CD8-positive, alpha-beta T cell (primary cell): ENCODE measurements at regions of chr11 and their contacts with region 1.

Region 1: GRCh38 chr11:118002541-118003423 is 16.6 kb downstream of the IL10RA start:
- DNase-seq: peak in 5 of 9 experiments; percentile 42 to 76 (median 55)
- ATAC-seq: peak; percentile 42
- H3K4me3 ChIP-seq: no peak overlapping the region
- H3K4me3 Mint-ChIP-seq: peak overlapping the region; percentile 26
- H3K27ac ChIP-seq: peak overlapping the region; percentile 20 to 84
- H3K27ac Mint-ChIP-seq: peak overlapping the region; percentile 91
- H3K4me1 ChIP-seq: peaks cover 89% of the 10 kb centered on the region
- H3K4me1 Mint-ChIP-seq: peaks cover 94% of the 10 kb centered on the region
- H3K27me3 ChIP-seq: no peaks in the 10 kb centered on the region
- H3K27me3 Mint-ChIP-seq: no peaks in the 10 kb centered on the region
- CTCF ChIP-seq: no peak

Region 2: GRCh38 chr11:117143871-117144476 is 858.8 kb before region 1 on chr11 and contains the start of gene PAFAH1B2:
- CTCF ChIA-PET with region 1: no interaction called
- POLR2A ChIA-PET with region 1: no interaction called
- intact Hi-C with region 1: no loop called
- DNase-seq: peak; percentile 87 to 97 (median 95)
- ATAC-seq: peak; percentile 82
- H3K4me3 ChIP-seq: peak within 1 kb of the TSS; percentile 74 to 78
- H3K4me3 Mint-ChIP-seq: peak within 1 kb of the TSS; percentile 95
- H3K27ac ChIP-seq: peak within 1 kb of the TSS; percentile 69 to 75
- H3K27ac Mint-ChIP-seq: peak within 1 kb of the TSS; percentile 95
- H3K4me1 ChIP-seq: peaks cover 16% of the 10 kb centered on the region
- H3K4me1 Mint-ChIP-seq: peaks cover 44% of the 10 kb centered on the region
- H3K27me3 ChIP-seq: peaks cover 0 to 3% of the 10 kb centered on the region in 2 experiments
- H3K27me3 Mint-ChIP-seq: peaks cover 5% of the 10 kb centered on the region
- CTCF ChIP-seq: no peak
- total RNA-seq, gene PAFAH1B2: 52.1 to 55.9 TPM

Region 3: DNA sequence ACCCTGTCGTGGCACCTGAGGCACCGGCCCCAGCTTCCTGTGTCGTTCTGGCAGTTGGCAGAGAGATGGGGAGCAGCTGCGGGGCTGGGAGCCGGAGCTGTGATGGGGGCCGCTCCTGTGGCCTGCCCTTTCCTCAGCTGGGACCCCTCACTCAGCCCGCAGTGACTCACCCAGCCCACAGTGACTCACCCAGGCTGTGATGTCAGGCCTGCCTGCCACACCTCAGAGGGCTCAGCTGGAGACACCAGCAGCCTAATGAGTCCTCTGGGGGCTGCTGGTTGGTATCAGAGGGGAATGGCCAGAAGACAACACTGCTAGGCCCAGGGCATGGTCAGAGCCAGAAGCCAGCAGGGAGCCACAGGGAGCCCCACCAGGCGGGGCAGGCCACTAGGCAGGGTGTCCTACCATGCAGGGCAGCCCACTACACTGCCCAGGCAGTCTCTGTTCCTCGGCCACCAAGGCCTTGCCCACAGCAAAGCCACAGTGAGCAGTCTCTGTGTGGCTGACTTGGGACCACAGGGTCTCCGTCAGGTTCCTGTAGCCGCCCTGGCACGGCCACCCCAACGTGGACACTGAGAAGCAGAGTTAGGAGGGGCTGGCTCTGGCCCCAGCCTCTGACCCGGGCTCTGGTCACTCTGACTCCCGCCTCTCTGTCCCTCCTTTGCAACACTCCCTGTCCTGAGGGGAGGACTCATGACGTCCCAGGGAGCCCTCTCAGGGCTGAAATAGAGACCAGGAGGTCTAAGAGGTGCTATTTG is 174.0 kb before region 1 on chr11:
- CTCF ChIA-PET with region 1: no interaction called
- POLR2A ChIA-PET with region 1: no interaction called
- intact Hi-C with region 1: loop called in 1 of 2 experiments (anchors 5 kb)
- DNase-seq: peak; percentile 58 to 94 (median 89)
- ATAC-seq: peak; percentile 87
- H3K4me3 ChIP-seq: no peak overlapping the region
- H3K4me3 Mint-ChIP-seq: peak overlapping the region; percentile 53
- H3K27ac ChIP-seq: peak overlapping the region in 1 of 2 experiments; percentile 69
- H3K27ac Mint-ChIP-seq: peak overlapping the region; percentile 91
- H3K4me1 ChIP-seq: peaks cover 52% of the 10 kb centered on the region
- H3K4me1 Mint-ChIP-seq: peaks cover 69% of the 10 kb centered on the region
- H3K27me3 ChIP-seq: no peaks in the 10 kb centered on the region
- H3K27me3 Mint-ChIP-seq: no peaks in the 10 kb centered on the region
- CTCF ChIP-seq: no peak

Region 4: DNA sequence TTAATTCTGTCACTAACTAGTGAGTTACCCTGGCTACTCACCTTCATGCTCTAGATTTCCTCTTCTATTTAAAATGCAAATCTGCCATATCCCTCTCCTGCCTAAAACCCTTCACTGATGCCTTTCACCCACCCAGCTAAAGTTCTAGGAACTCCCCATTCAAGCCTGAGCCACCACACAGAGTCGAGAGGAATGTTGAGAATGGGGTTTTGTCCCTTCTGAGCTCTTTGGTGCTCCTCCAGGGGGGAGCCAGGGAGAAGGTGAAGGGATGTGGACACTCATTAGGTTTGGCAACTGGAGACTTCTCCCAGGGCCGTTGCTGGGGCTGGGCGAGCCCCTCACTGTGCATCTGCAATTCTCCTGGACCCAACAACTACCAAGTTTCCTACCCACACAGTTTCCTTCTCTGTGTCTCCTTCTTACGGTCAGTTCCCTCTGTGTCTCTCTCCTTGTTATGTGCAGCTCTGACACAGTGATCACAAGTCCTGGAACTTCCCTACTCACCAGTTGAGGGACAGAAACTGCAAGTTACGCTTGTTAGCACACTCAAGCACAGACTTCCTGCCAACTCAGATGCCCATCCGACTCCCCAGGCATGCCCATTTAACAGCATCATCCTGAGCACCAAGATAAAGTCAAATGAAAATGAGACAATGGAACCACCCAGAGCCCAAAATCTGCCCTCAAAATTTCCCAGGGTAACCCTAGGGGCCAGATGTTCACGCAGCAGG is 23.1 kb before region 1 on chr11:
- CTCF ChIA-PET with region 1: interaction called, 4 read pairs
- POLR2A ChIA-PET with region 1: interaction called, 633 read pairs
- intact Hi-C with region 1: no loop called
- DNase-seq: peak in 2 of 9 experiments; percentile 53 to 66
- ATAC-seq: peak; percentile 45
- H3K4me3 ChIP-seq: no peak overlapping the region
- H3K4me3 Mint-ChIP-seq: peak overlapping the region; percentile 13
- H3K27ac ChIP-seq: peak overlapping the region in 1 of 2 experiments; percentile 24
- H3K27ac Mint-ChIP-seq: peak overlapping the region; percentile 49
- H3K4me1 ChIP-seq: peaks cover 70% of the 10 kb centered on the region
- H3K4me1 Mint-ChIP-seq: peaks cover 76% of the 10 kb centered on the region
- H3K27me3 ChIP-seq: no peaks in the 10 kb centered on the region
- H3K27me3 Mint-ChIP-seq: no peaks in the 10 kb centered on the region
- CTCF ChIP-seq: no peak

Region 5: GRCh38 chr11:117985953-117986887 is 16.6 kb before region 1 on chr11 and contains the start of gene IL10RA:
- CTCF ChIA-PET with region 1: interaction called, 41 read pairs
- POLR2A ChIA-PET with region 1: interaction called, 633 read pairs
- intact Hi-C with region 1: loop called in 1 of 2 experiments (anchors 1 kb)
- DNase-seq: peak; percentile 66 to 92 (median 80)
- ATAC-seq: peak; percentile 75
- H3K4me3 ChIP-seq: peak within 1 kb of the TSS; percentile 81 to 100
- H3K4me3 Mint-ChIP-seq: peak within 1 kb of the TSS; percentile 89
- H3K27ac ChIP-seq: peak within 1 kb of the TSS; percentile 88
- H3K27ac Mint-ChIP-seq: peak within 1 kb of the TSS; percentile 92
- H3K4me1 ChIP-seq: peaks cover 57% of the 10 kb centered on the region
- H3K4me1 Mint-ChIP-seq: peaks cover 72% of the 10 kb centered on the region
- H3K27me3 ChIP-seq: no peaks in the 10 kb centered on the region
- H3K27me3 Mint-ChIP-seq: no peaks in the 10 kb centered on the region
- CTCF ChIP-seq: no peak
- total RNA-seq, gene IL10RA: 295 to 299 TPM

Region 6: GRCh38 chr11:118046051-118046963 is 43.5 kb after region 1 on chr11:
- CTCF ChIA-PET with region 1: interaction called, 270 read pairs
- POLR2A ChIA-PET with region 1: interaction called, 176 read pairs
- intact Hi-C with region 1: loop called (anchors 2 to 5 kb)
- DNase-seq: peak; percentile 18 to 88 (median 59)
- ATAC-seq: peak; percentile 83
- H3K4me3 ChIP-seq: no peak overlapping the region
- H3K4me3 Mint-ChIP-seq: peak overlapping the region; percentile 38
- H3K27ac ChIP-seq: peak overlapping the region; percentile 40 to 82
- H3K27ac Mint-ChIP-seq: peak overlapping the region; percentile 94
- H3K4me1 ChIP-seq: peaks cover 91% of the 10 kb centered on the region
- H3K4me1 Mint-ChIP-seq: peaks cover 83% of the 10 kb centered on the region
- H3K27me3 ChIP-seq: no peaks in the 10 kb centered on the region
- H3K27me3 Mint-ChIP-seq: no peaks in the 10 kb centered on the region
- CTCF ChIP-seq: no peak